ENCODE measurements at regions of chr5 and their contacts with region 1.

Region 1: DNA sequence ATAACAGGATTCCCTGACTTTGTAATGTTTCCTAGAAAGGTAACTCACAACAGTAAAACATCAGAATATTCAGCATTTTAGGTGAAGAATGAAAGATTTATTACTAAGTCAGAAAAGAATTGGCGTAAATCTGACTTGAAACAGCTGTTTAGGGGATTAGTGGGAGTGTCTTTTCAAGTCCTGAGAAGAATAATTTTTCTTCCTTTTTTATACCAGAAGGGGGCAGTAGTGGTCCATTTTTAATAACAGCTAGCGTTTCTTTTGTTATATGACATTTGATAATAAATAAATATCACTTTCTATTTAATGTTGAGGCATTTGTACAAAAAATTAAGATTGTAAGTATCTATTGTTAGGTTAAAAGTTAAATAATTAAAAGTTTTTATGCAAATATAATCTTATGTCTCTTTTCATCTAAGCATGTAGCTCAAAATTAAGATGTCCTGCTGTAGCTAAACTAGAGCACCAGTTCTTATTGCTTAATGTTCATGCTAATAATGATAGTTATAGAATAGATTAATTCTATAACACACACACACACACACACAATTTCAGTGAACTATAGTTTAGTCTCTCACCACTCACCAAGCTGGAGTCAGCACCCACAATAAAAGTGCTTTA is 258.7 kb upstream of the ARRDC3 start:
- DNase-seq: no peak
- ATAC-seq: no peak
- H3K4me3 Mint-ChIP-seq: no peak overlapping the region
- H3K27ac Mint-ChIP-seq: no peak overlapping the region
- H3K4me1 Mint-ChIP-seq: no peaks in the 10 kb centered on the region
- H3K27me3 Mint-ChIP-seq: no peaks in the 10 kb centered on the region

Region 2: GRCh38 chr5:91499943-91500531 is 141.8 kb before region 1 on chr5:
- CTCF ChIA-PET with region 1: interaction called, 19 read pairs
- POLR2A ChIA-PET with region 1: no interaction called
- DNase-seq: no peak
- ATAC-seq: peak; percentile 60
- H3K4me3 Mint-ChIP-seq: no peak overlapping the region
- H3K27ac Mint-ChIP-seq: no peak overlapping the region
- H3K4me1 Mint-ChIP-seq: no peaks in the 10 kb centered on the region
- H3K27me3 Mint-ChIP-seq: peaks cover 2% of the 10 kb centered on the region

Region 3: DNA sequence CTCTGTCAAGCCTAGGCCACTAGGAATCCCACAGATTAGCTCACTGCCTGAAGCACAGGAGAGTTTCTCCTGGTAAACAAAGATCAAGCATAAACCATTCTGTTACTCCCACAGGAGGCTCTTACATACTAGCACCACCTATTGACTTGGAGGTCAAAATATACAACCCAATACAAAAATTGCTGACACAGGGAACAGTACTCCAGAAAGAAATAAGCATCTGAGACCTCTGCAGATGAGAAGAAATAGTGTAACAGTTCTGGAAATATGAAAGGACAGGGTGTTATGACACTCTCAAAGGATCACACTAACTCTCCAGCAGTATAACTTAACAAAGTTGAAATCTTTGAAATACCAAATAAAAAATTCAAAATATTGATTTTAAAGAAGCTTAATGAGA is 10.8 kb after region 1 on chr5:
- CTCF ChIA-PET with region 1: interaction called, 10 read pairs
- POLR2A ChIA-PET with region 1: no interaction called
- DNase-seq: no peak
- ATAC-seq: no peak
- H3K4me3 Mint-ChIP-seq: no peak overlapping the region
- H3K27ac Mint-ChIP-seq: no peak overlapping the region
- H3K4me1 Mint-ChIP-seq: no peaks in the 10 kb centered on the region
- H3K27me3 Mint-ChIP-seq: no peaks in the 10 kb centered on the region